Upper lobe of right lung (tissue), 1 donor: ENCODE measurements at regions of chr1 and their contacts with region 1.

Region 1: DNA sequence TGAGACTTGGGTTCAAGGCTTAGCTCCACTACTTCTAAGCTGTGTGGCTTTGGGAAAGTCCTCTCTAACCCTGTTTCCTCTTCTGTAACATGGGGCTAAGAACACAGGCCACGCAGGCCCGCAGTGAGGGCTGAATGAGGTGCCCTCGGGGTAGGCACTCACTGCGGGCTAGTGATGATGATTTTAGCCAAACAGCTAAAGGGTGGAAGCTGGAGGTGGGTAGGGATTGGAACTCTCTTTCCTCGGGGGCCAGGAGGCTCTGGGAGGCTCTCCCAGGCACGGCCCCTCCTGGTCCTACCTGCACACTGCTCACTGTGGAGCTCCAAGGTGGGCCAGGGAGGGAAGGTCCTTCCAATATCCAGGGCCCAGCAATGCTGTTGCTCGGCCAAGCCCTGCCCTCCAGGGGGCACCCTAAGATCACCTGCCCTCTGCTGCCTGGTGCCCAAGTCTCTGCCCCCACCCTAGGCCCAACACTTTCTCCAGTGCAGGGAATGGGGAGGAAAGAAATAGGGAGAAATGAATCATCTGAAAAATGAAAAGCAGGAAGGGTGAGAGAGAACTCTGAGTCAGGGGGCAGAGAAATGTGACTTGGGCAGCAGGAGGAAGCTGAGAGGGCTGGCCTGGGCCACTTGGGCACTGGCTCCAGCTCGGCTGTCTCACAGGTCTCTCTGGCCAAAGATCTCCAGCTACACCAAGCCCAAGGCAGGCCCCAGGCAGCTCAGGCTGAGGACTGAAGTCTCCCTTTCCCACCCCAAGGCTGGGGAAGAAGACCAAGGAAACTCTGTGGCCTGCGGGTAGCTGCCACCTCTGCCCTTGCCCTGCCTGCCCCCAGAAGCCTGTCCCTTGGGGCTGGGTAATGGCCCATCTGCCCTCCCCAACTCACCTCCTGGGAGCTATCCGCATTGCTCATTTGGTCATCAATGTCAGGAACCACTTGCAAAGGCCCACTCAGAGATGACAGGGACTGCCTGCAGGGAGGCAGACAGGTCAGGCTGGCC is 19.3 kb upstream of the EVA1B start:
- DNase-seq: peak; percentile 75
- ATAC-seq: peak; percentile 78
- H3K4me3 ChIP-seq: no peak overlapping the region
- H3K27ac ChIP-seq: peak overlapping the region; percentile 37
- H3K4me1 ChIP-seq: peaks cover 6% of the 10 kb centered on the region
- H3K27me3 ChIP-seq: no peaks in the 10 kb centered on the region
- CTCF ChIP-seq: peak; percentile 72

Region 2: GRCh38 chr1:36115200-36115669 is 227.5 kb before region 1 on chr1:
- intact Hi-C with region 1: no loop called
- DNase-seq: no peak
- ATAC-seq: peak; percentile 44
- H3K4me3 ChIP-seq: no peak overlapping the region
- H3K27ac ChIP-seq: peak overlapping the region; percentile 27
- H3K4me1 ChIP-seq: peaks cover 12% of the 10 kb centered on the region
- H3K27me3 ChIP-seq: no peaks in the 10 kb centered on the region
- CTCF ChIP-seq: no peak

Region 3: DNA sequence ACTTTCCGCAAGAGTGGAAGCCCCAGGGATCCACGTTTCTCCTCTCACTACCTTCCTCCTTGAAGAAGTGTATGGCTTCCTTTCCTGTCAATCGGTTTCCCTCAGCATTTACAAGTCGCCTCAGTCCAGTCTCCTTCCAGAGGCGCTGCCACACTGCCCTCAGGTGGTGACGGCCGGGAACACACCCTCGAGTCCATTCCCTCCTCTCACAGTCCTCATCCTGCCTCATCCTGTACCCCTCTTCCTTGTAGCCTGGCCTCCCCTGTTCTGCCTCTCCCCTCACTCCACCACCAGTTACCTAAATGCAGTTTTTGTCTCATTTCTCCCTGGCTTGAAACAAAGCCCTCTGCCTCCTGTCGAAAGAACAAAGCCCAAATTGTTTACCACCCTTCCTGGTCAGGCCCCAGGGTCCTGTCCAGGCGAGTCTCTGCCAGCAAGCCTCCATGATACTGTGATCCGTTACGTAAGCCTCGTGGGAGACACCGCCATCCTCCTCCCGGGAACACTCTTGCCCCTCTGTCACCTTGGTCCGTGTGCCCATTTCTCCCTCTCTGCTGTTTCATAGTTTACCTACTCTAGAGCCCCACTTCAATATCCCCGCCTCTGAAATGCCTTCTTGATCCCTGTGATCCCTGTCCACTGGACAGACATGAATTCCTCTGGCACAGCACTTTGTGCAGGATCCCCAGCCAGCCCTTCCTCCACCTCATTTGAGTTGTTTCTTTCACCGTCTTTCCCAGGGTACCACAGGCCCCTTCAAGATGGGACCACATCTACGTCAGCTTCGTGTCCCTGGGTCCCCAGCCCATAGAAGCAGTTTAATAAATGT is 78.3 kb after region 1 on chr1:
- intact Hi-C with region 1: loop called (anchors 10 kb)
- DNase-seq: peak; percentile 92
- ATAC-seq: peak; percentile 99
- H3K4me3 ChIP-seq: no peak overlapping the region
- H3K27ac ChIP-seq: no peak overlapping the region
- H3K4me1 ChIP-seq: peaks cover 11% of the 10 kb centered on the region
- H3K27me3 ChIP-seq: no peaks in the 10 kb centered on the region
- CTCF ChIP-seq: peak; percentile 95